ENCODE measurements at regions of chr2 and their contacts with region 1.

Region 1: DNA sequence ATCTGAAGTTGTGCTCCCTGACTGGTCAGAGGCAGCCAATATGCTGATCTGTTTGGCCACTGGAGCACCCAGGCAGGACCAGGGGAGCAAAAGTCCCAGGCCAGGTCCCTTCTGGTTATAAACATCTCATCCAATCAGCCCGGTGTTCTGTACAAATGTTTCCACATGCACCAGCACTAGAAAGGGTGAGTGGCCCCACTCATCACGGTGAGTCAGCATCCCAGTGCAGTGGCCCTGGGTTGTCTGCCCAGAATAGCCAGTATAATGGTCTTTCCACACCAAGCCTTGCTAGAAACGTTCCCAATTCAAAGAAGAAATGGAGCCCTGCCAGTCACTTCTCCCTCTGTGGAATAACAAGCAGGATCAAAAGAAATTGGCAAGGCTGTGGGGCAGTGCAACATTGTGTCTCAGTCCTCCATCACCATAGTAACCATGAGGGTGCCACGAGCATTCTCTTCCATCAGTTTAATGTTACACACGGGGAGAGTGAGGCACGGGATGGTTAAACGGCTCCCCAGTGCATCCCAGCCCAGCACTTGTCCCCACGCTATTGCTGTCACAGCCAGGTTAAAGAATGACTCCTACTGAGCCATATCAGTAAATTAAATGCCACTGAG is 174.9 kb downstream of the SEPTIN10 start:
- DNase-seq: no peak
- ATAC-seq: peak; percentile 71

Region 2: GRCh38 chr2:109382951-109383350 is 55.9 kb before region 1 on chr2:
- intact Hi-C with region 1: loop called (anchors 5 kb)
- DNase-seq: peak; percentile 77
- ATAC-seq: peak; percentile 92

Region 3: GRCh38 chr2:109497463-109497862 is 58.6 kb after region 1 on chr2:
- intact Hi-C with region 1: no loop called
- DNase-seq: no peak
- ATAC-seq: no peak